PC-9 (cell line): ENCODE measurements at regions of chr7 and their contacts with region 1.

Region 1: GRCh38 chr7:12540850-12541249 is 29.7 kb upstream of the SCIN start:
- DNase-seq: no peak
- H3K4me3 ChIP-seq: no peak overlapping the region
- H3K27ac ChIP-seq: no peak overlapping the region
- H3K4me1 ChIP-seq: peaks cover 14% of the 10 kb centered on the region
- H3K27me3 ChIP-seq: no peaks in the 10 kb centered on the region
- CTCF ChIP-seq: no peak

Region 2: GRCh38 chr7:12584930-12585329 is 44.1 kb after region 1 on chr7:
- CTCF ChIA-PET with region 1: no interaction called
- POLR2A ChIA-PET with region 1: no interaction called
- intact Hi-C with region 1: loop called (anchors 5 kb)
- DNase-seq: peak; percentile 31 to 53
- H3K4me3 ChIP-seq: no peak overlapping the region
- H3K27ac ChIP-seq: no peak overlapping the region
- H3K4me1 ChIP-seq: peaks cover 28% of the 10 kb centered on the region
- H3K27me3 ChIP-seq: no peaks in the 10 kb centered on the region
- CTCF ChIP-seq: no peak